GM23248 (cell line): ENCODE measurements at regions of chr15 and their contacts with region 1.

Region 1: GRCh38 chr15:91224755-91225380 is 124.8 kb downstream of the SV2B start:
- DNase-seq: peak; percentile 50
- H3K4me3 ChIP-seq: no peak overlapping the region
- H3K27ac ChIP-seq: no peak overlapping the region
- H3K4me1 ChIP-seq: no peaks in the 10 kb centered on the region
- H3K27me3 ChIP-seq: peaks cover 10% of the 10 kb centered on the region; the same call in 1 of the 2 replicates

Region 2: DNA sequence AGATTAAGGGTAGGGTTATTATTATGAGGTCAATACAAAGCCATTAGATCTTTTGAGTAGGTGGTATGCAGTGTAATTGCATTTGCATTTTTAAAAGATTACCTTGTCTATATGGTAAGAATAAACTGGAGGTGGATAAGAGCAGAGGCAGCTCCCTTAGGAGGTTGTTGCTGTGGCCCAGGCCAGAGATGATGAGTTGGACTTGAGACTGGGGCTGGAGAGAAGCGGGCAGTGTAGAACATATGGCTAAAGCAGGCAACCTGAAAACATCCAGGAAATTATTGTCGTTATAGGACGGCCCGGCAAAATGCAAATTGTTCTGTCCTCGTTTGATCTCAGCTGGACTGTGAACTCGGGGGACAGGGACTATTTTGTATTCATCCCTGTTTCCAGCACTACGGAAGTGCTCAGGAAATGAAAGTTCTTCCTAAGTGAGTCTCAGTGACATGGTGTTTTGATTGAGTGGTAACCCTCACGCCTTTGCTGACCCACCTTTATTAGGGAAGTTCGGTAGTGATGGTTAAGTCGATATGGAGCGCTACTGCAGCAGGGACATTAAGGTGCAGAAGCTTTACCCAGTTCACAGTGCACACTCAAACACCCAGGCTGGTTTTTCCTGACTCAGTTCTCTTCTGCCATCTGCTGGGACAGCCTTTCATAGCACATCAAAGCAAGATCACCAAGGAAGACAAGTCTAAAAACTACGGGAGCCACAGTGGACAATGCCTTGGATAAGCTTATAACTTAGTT is 175.3 kb before region 1 on chr15:
- in situ Hi-C with region 1: loop called (anchors 25 kb)
- DNase-seq: peak; percentile 70
- H3K4me3 ChIP-seq: no peak overlapping the region
- H3K27ac ChIP-seq: no peak overlapping the region
- H3K4me1 ChIP-seq: no peaks in the 10 kb centered on the region
- H3K27me3 ChIP-seq: peaks cover 16% of the 10 kb centered on the region; the same call in 1 of the 2 replicates

Region 3: GRCh38 chr15:91142114-91142731 is 82.6 kb before region 1 on chr15:
- in situ Hi-C with region 1: no loop called
- DNase-seq: peak; percentile 7
- H3K4me3 ChIP-seq: no peak overlapping the region
- H3K27ac ChIP-seq: no peak overlapping the region
- H3K4me1 ChIP-seq: no peaks in the 10 kb centered on the region
- H3K27me3 ChIP-seq: no peaks in the 10 kb centered on the region

Region 4: GRCh38 chr15:91369823-91370222 is 145.0 kb after region 1 on chr15:
- in situ Hi-C with region 1: no loop called
- DNase-seq: no peak
- H3K4me3 ChIP-seq: no peak overlapping the region
- H3K27ac ChIP-seq: no peak overlapping the region
- H3K4me1 ChIP-seq: no peaks in the 10 kb centered on the region
- H3K27me3 ChIP-seq: no peaks in the 10 kb centered on the region